Activated CD4-positive, alpha-beta memory T cell treated with anti-CD3 and anti-CD28 coated beads for 36 hours (primary cell): ENCODE measurements at regions of chr9 and their contacts with region 1.

Region 1: DNA sequence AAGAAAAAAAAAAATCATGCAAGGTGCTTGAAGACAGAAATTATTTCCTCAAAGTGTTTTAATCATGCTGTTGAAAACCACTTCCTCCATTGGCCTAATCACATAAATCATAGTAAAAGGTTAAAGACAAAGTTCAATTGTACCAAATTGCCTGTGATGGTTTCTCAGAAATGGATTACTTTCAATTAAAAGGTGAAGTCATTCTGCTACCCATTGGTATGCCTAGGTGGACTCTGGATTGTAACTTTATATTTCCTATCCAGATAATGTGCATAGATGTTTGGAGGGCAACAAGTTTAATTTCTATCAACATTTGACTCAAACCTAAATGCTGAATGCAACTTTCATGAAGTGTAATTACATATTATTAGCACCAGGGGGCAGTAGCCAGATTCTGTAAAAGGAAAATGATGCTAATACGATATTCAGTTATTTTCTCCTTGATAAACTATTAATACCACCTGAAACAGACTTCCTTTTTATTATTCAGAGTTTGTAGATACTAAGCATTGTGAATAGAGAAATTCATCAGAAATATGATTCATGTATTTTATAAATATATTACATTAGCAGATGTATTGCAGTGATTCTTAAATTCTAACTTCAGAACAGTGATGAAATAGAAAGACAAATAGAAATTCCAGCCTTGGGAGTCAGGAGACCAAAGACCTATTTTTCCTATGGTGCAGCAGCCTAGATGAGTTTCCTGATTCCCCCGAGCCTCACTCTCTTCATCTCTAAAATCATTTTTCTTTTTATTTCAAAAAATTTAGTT is 148.2 kb downstream of the CAAP1 start:
- DNase-seq: no peak
- H3K4me3 Mint-ChIP-seq: no peak overlapping the region
- H3K27ac Mint-ChIP-seq: no peak overlapping the region
- H3K4me1 Mint-ChIP-seq: peaks cover 2% of the 10 kb centered on the region
- H3K27me3 Mint-ChIP-seq: peaks cover 5% of the 10 kb centered on the region

Region 2: GRCh38 chr9:26504057-26504456 is 240.3 kb before region 1 on chr9:
- CTCF ChIA-PET with region 1: no interaction called
- POLR2A ChIA-PET with region 1: no interaction called
- intact Hi-C with region 1: no loop called
- DNase-seq: no peak
- H3K4me3 Mint-ChIP-seq: no peak overlapping the region
- H3K27ac Mint-ChIP-seq: no peak overlapping the region
- H3K4me1 Mint-ChIP-seq: no peaks in the 10 kb centered on the region
- H3K27me3 Mint-ChIP-seq: no peaks in the 10 kb centered on the region

Region 3: GRCh38 chr9:26537211-26537610 is 207.2 kb before region 1 on chr9:
- CTCF ChIA-PET with region 1: no interaction called
- POLR2A ChIA-PET with region 1: no interaction called
- intact Hi-C with region 1: no loop called
- DNase-seq: no peak
- H3K4me3 Mint-ChIP-seq: no peak overlapping the region
- H3K27ac Mint-ChIP-seq: no peak overlapping the region
- H3K4me1 Mint-ChIP-seq: no peaks in the 10 kb centered on the region
- H3K27me3 Mint-ChIP-seq: no peaks in the 10 kb centered on the region

Region 4: GRCh38 chr9:26779072-26779471 is 34.7 kb after region 1 on chr9:
- CTCF ChIA-PET with region 1: no interaction called
- POLR2A ChIA-PET with region 1: no interaction called
- intact Hi-C with region 1: no loop called
- DNase-seq: no peak
- H3K4me3 Mint-ChIP-seq: no peak overlapping the region
- H3K27ac Mint-ChIP-seq: no peak overlapping the region
- H3K4me1 Mint-ChIP-seq: no peaks in the 10 kb centered on the region
- H3K27me3 Mint-ChIP-seq: peaks cover 3% of the 10 kb centered on the region

Region 5: GRCh38 chr9:26809795-26810194 is 65.4 kb after region 1 on chr9:
- CTCF ChIA-PET with region 1: no interaction called
- POLR2A ChIA-PET with region 1: no interaction called
- intact Hi-C with region 1: loop called (anchors 10 kb)
- DNase-seq: no peak
- H3K4me3 Mint-ChIP-seq: no peak overlapping the region
- H3K27ac Mint-ChIP-seq: no peak overlapping the region
- H3K4me1 Mint-ChIP-seq: no peaks in the 10 kb centered on the region
- H3K27me3 Mint-ChIP-seq: peaks cover 3% of the 10 kb centered on the region

Region 6: GRCh38 chr9:26856413-26857032 is 112.1 kb after region 1 on chr9:
- CTCF ChIA-PET with region 1: no interaction called
- POLR2A ChIA-PET with region 1: no interaction called
- intact Hi-C with region 1: loop called (anchors 1 kb)
- DNase-seq: peak; percentile 24
- H3K4me3 Mint-ChIP-seq: no peak overlapping the region
- H3K27ac Mint-ChIP-seq: no peak overlapping the region
- H3K4me1 Mint-ChIP-seq: no peaks in the 10 kb centered on the region
- H3K27me3 Mint-ChIP-seq: no peaks in the 10 kb centered on the region

Region 7: GRCh38 chr9:26975693-26976059 is 231.3 kb after region 1 on chr9:
- CTCF ChIA-PET with region 1: no interaction called
- POLR2A ChIA-PET with region 1: no interaction called
- intact Hi-C with region 1: loop called (anchors 1 kb)
- DNase-seq: no peak
- H3K4me3 Mint-ChIP-seq: no peak overlapping the region
- H3K27ac Mint-ChIP-seq: no peak overlapping the region
- H3K4me1 Mint-ChIP-seq: no peaks in the 10 kb centered on the region
- H3K27me3 Mint-ChIP-seq: no peaks in the 10 kb centered on the region

Region 8: GRCh38 chr9:27276193-27277030 is 532.0 kb after region 1 on chr9:
- CTCF ChIA-PET with region 1: no interaction called
- POLR2A ChIA-PET with region 1: no interaction called
- intact Hi-C with region 1: loop called (anchors 1 kb)
- DNase-seq: no peak
- H3K4me3 Mint-ChIP-seq: no peak overlapping the region
- H3K27ac Mint-ChIP-seq: no peak overlapping the region
- H3K4me1 Mint-ChIP-seq: no peaks in the 10 kb centered on the region
- H3K27me3 Mint-ChIP-seq: no peaks in the 10 kb centered on the region